ENCODE measurements at regions of chr7 and their contacts with region 1.

Region 1: GRCh38 chr7:76047811-76048667 is at the starts of genes MDH2 and STYXL1:
- DNase-seq: peak; percentile 95
- ATAC-seq: peak; percentile 96
- H3K4me3 Mint-ChIP-seq: peak within 1 kb of the TSS; percentile 92
- H3K27ac Mint-ChIP-seq: peak within 1 kb of the TSS; percentile 97
- H3K4me1 Mint-ChIP-seq: peaks cover 43% of the 10 kb centered on the region
- H3K27me3 Mint-ChIP-seq: no peaks in the 10 kb centered on the region
- total RNA-seq, gene MDH2: 257 to 328 TPM
- total RNA-seq, gene STYXL1: 47.5 to 50.5 TPM

Region 2: GRCh38 chr7:75738987-75739795 is 308.8 kb before region 1 on chr7:
- CTCF ChIA-PET with region 1: no interaction called
- POLR2A ChIA-PET with region 1: no interaction called
- intact Hi-C with region 1: loop called in 1 of 2 experiments (anchors 1 kb)
- DNase-seq: peak; percentile 100
- ATAC-seq: peak; percentile 99
- H3K4me3 Mint-ChIP-seq: peak overlapping the region; percentile 85
- H3K27ac Mint-ChIP-seq: peak overlapping the region; percentile 91
- H3K4me1 Mint-ChIP-seq: peaks cover 19% of the 10 kb centered on the region
- H3K27me3 Mint-ChIP-seq: peaks cover 10% of the 10 kb centered on the region

Region 3: DNA sequence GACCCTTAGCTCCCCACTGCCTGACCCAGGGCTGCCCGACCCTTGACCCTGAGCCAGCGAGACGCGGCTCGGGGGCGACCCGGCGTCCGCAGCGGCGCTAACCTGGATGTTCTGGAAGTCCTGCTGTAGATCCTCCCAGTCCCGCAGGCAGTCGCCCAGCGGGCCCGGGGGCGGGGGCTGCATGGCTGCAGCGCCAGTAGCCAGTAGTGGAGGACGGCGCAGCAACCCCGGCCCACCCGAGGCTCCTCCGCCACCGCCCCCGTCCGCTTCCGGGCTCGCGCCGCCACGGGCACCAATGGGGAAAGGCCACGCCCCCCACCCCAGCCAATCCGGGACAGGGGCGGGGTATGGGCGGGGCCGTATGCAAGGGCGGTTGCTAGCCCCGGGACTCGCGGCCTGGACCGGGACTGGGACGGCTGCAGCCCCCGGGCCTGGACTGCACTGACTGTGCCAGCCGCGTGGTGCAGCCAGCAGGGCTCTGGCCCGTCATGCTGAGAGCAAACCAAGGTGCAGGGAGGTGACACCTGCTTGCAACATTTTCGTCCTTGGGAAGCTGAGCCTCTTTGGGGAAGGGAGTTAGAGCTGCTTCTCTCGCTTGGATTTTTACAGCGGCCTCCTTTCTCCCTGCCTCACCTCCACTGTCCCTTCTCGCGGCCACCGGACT is 53.5 kb before region 1 on chr7 and contains the start of gene TMEM120A:
- CTCF ChIA-PET with region 1: no interaction called
- POLR2A ChIA-PET with region 1: no interaction called
- intact Hi-C with region 1: loop called in 1 of 2 experiments (anchors 1 kb)
- DNase-seq: peak; percentile 97
- ATAC-seq: peak; percentile 99
- H3K4me3 Mint-ChIP-seq: peak within 1 kb of the TSS; percentile 66
- H3K27ac Mint-ChIP-seq: no peak within 1 kb of the TSS
- H3K4me1 Mint-ChIP-seq: peaks cover 29% of the 10 kb centered on the region
- H3K27me3 Mint-ChIP-seq: no peaks in the 10 kb centered on the region
- total RNA-seq, gene TMEM120A: 14.5 to 15.3 TPM

Region 4: GRCh38 chr7:76074954-76075335 is 26.9 kb after region 1 on chr7:
- CTCF ChIA-PET with region 1: no interaction called
- POLR2A ChIA-PET with region 1: no interaction called
- intact Hi-C with region 1: no loop called
- DNase-seq: no peak
- ATAC-seq: no peak
- H3K4me3 Mint-ChIP-seq: no peak overlapping the region
- H3K27ac Mint-ChIP-seq: no peak overlapping the region
- H3K4me1 Mint-ChIP-seq: peaks cover 8% of the 10 kb centered on the region
- H3K27me3 Mint-ChIP-seq: no peaks in the 10 kb centered on the region

Region 5: DNA sequence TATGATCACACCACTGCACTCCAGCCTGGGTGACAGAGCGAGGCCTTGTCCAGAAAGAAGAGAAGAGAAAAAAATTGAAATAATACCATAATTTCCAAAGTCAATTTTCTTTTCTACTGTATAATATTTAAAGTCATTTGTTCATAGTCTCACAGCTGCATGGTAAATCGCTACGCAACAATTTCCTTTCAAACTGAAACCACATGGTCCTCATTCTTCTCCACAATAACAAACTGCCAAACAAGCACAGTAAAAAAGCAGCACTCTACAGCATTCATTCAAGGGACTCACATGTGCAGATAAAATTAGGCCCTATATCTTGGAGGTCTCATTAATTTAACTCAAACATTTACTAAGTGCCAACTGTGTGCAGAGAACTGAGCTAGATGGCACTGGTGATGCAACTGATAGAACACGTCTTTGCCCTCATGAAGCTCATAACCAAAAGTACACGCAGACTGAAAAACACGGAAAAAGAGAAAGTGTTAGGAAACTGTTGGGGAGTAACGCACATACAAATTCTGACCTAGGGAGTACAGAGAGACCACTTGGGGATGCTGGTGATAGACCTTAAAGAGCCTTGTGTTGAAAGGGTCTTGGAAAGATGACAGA is 85.2 kb after region 1 on chr7:
- CTCF ChIA-PET with region 1: no interaction called
- POLR2A ChIA-PET with region 1: interaction called, 3 read pairs
- intact Hi-C with region 1: loop called in 1 of 2 experiments (anchors 10 kb)
- DNase-seq: no peak
- ATAC-seq: peak; percentile 62
- H3K4me3 Mint-ChIP-seq: peak overlapping the region; percentile 33
- H3K27ac Mint-ChIP-seq: peak overlapping the region; percentile 64
- H3K4me1 Mint-ChIP-seq: peaks cover 34% of the 10 kb centered on the region
- H3K27me3 Mint-ChIP-seq: no peaks in the 10 kb centered on the region

Region 6: GRCh38 chr7:76340617-76341131 is 292.6 kb after region 1 on chr7:
- CTCF ChIA-PET with region 1: no interaction called
- POLR2A ChIA-PET with region 1: no interaction called
- intact Hi-C with region 1: no loop called
- DNase-seq: no peak
- ATAC-seq: no peak
- H3K4me3 Mint-ChIP-seq: no peak overlapping the region
- H3K27ac Mint-ChIP-seq: peak overlapping the region; percentile 44
- H3K4me1 Mint-ChIP-seq: peaks cover 70% of the 10 kb centered on the region
- H3K27me3 Mint-ChIP-seq: no peaks in the 10 kb centered on the region

Region 7: DNA sequence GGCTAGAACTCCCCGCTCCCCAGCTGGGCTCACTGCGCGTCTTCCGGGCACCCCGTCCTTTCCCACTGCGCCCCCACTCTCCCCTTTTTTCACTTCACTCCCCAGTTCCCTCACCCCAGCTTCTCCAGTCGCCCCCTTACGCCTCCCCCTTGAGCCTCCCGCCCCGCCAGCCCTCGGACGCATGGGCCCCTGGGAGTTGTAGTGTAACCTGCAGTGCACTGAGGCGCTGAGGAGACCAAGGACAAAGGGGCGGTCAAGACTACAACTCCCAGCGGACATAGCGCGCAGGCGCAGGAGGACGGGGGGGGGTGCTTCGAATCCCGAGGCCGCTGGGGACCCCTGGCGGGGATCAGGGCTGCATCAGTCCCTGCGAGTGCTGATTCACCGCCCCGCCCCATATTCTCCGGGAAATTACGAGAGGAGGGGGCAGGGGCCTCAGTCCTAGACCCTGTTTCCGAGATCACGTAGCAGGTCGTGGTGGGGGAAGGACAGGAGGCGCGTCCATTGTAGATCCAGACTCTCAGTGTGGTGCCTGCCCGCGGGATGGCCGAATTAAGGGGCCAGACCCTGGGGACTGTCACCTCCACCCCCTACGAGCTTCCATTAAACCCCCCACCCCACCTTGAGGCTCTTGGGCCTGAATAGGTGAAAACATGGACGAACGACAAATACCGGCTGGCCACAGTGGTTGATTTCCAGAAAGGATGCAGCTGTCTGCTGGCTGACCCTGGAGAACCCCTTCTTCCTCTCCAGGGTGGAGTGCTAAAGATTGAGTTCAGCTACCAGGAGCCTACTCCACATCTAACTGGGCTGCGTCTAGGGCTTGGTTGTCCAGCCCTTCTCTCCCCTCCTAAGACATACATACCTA is 311.3 kb after region 1 on chr7:
- CTCF ChIA-PET with region 1: interaction called, 3 read pairs
- POLR2A ChIA-PET with region 1: no interaction called
- intact Hi-C with region 1: loop called in 1 of 2 experiments (anchors 1 kb)
- DNase-seq: peak; percentile 98
- ATAC-seq: peak; percentile 96
- H3K4me3 Mint-ChIP-seq: peak overlapping the region; percentile 99
- H3K27ac Mint-ChIP-seq: peak overlapping the region; percentile 96
- H3K4me1 Mint-ChIP-seq: peaks cover 41% of the 10 kb centered on the region
- H3K27me3 Mint-ChIP-seq: no peaks in the 10 kb centered on the region

Measured in activated CD4-positive, alpha-beta T cell treated with anti-CD3 and anti-CD28 coated beads for 36 hours (primary cell).